Activated CD4-positive, alpha-beta T cell treated with anti-CD3 and anti-CD28 coated beads for 36 hours (primary cell): ENCODE measurements at regions of chr3 and their contacts with region 1.

Region 1: DNA sequence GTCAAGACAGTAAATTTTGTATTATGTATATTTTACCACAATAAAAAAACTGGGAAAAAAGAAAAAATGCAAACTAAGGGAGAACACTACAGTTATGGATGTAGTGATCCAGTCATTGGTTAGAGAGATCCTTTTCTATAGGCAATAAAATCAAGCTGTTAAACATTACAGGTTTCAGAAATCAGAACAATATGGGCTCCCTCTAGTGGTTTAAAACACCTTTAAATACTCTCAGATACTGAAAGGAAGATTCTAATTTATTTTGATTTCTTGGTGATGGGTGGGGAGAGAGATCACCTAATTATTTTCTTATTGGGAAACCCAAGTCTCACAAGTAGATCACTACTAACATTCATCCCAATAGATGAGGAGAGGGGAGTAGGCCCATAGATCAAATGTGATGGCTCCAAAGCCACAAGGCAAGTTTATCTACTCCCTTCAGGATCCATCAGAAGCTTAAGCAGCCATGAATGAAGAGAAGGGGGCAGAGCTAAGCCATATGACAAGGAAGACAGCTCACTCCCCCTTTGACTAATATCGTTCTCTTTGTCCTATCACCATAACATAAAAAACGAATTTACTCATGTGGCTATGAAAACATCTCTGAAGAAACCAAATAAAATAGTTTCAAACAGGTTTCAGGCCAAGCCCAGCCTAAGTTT is 118.6 kb downstream of the ANO10 start:
- DNase-seq: no peak
- ATAC-seq: peak; percentile 20
- H3K4me3 Mint-ChIP-seq: no peak overlapping the region
- H3K27ac Mint-ChIP-seq: peak overlapping the region; percentile 30
- H3K4me1 Mint-ChIP-seq: peaks cover 62% of the 10 kb centered on the region
- H3K27me3 Mint-ChIP-seq: peaks cover 15% of the 10 kb centered on the region

Region 2: DNA sequence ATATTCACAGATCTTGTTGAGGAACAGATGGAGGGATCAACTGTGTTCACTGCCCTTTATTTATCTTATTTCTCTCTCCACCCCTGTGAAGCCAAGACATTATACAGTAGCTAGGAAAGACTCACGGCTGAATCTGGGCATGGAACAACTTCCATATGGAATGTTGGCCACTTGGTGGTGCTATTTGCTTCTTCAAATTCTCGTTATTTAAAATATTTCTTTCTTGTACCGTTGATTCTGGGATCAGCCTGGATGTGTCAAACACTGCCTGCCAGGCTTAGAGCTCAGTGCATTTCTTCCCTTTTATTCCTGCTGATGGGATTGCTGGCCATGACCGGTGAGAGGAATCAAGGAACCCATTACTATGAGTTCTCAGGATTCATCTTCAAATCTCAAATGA is 541.6 kb before region 1 on chr3:
- CTCF ChIA-PET with region 1: interaction called, 8 read pairs
- POLR2A ChIA-PET with region 1: interaction called, 4 read pairs
- intact Hi-C with region 1: loop called (anchors 5 to 10 kb)
- DNase-seq: peak; percentile 31
- ATAC-seq: no peak
- H3K4me3 Mint-ChIP-seq: no peak overlapping the region
- H3K27ac Mint-ChIP-seq: no peak overlapping the region
- H3K4me1 Mint-ChIP-seq: peaks cover 22% of the 10 kb centered on the region
- H3K27me3 Mint-ChIP-seq: no peaks in the 10 kb centered on the region

Region 3: GRCh38 chr3:43223670-43224364 is 279.4 kb before region 1 on chr3:
- CTCF ChIA-PET with region 1: interaction called, 4 read pairs
- POLR2A ChIA-PET with region 1: no interaction called
- intact Hi-C with region 1: loop called (anchors 2 kb)
- DNase-seq: no peak
- ATAC-seq: peak; percentile 23
- H3K4me3 Mint-ChIP-seq: no peak overlapping the region
- H3K27ac Mint-ChIP-seq: no peak overlapping the region
- H3K4me1 Mint-ChIP-seq: peaks cover 50% of the 10 kb centered on the region
- H3K27me3 Mint-ChIP-seq: no peaks in the 10 kb centered on the region

Region 4: GRCh38 chr3:43389388-43390254 is 113.6 kb before region 1 on chr3:
- CTCF ChIA-PET with region 1: interaction called, 5 read pairs
- POLR2A ChIA-PET with region 1: no interaction called
- intact Hi-C with region 1: loop called (anchors 1 to 5 kb)
- DNase-seq: peak; percentile 81
- ATAC-seq: peak; percentile 94
- H3K4me3 Mint-ChIP-seq: peak overlapping the region; percentile 7
- H3K27ac Mint-ChIP-seq: peak overlapping the region; percentile 77
- H3K4me1 Mint-ChIP-seq: peaks cover 47% of the 10 kb centered on the region
- H3K27me3 Mint-ChIP-seq: no peaks in the 10 kb centered on the region

Region 5: DNA sequence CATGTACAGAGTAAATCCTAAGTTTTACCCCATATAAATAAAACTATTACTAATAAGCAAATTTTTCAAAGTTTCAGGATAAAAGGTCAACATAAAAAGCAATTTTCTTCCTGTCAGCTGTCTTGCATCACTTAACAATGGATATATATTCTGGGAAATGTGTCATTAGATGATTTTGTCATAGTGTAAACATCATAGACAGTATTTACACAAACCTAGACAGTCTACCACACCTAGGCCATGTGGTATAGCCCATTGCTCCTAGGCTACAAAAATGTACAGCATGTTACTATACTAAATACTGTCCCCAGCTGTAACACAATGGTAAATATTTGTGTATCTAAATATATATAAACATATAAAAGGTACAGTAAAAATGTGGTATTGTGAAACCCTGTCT is 38.1 kb before region 1 on chr3:
- CTCF ChIA-PET with region 1: no interaction called
- POLR2A ChIA-PET with region 1: no interaction called
- intact Hi-C with region 1: no loop called
- DNase-seq: no peak
- ATAC-seq: no peak
- H3K4me3 Mint-ChIP-seq: no peak overlapping the region
- H3K27ac Mint-ChIP-seq: no peak overlapping the region
- H3K4me1 Mint-ChIP-seq: peaks cover 4% of the 10 kb centered on the region
- H3K27me3 Mint-ChIP-seq: no peaks in the 10 kb centered on the region

Region 6: GRCh38 chr3:43523454-43524053 is 20.4 kb after region 1 on chr3:
- CTCF ChIA-PET with region 1: interaction called, 4 read pairs
- POLR2A ChIA-PET with region 1: interaction called, 7 read pairs
- intact Hi-C with region 1: loop called (anchors 1 kb)
- DNase-seq: peak; percentile 35
- ATAC-seq: peak; percentile 91
- H3K4me3 Mint-ChIP-seq: no peak overlapping the region
- H3K27ac Mint-ChIP-seq: no peak overlapping the region
- H3K4me1 Mint-ChIP-seq: no peaks in the 10 kb centered on the region
- H3K27me3 Mint-ChIP-seq: no peaks in the 10 kb centered on the region